ENCODE measurements at regions of chr12 and their contacts with region 1.

Region 1: DNA sequence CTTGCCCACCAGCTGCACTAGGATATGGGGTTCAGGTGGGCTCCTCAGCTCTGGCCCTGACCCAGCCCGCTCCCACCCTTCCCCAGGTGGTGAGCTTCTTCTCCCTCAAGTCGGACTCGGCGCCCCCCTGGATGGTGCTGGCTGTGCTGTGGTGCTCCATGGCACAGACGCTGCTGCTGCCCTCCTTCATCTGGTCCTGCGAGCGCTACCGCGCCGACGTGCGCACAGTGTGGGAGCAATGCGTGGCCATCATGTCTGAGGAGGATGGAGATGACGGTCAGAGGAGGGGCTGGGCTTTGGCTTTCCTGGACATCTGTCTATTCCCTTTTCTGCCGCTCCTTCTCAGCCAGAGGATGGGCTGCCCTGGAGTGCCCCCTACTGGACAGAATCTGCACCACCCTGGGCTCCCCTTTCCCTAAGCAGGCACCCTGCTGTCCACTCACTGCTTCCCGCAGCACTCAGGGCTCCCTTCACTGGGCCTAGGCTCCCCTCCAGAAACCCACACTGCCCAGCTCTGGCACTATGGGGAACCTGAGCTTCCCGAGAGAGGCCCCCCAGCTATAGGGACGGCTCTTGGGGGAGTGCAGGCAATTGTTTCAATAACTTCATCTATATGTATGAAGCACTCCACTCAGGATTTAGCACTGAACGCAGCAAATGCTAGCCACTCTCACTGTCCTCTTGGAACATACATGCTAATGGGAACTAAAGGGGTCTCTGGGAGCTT is 2.6 kb upstream of the P3H3 start:
- DNase-seq: peak; percentile 84
- ATAC-seq: peak; percentile 47
- H3K4me3 ChIP-seq: peak overlapping the region; percentile 18; the same call in 1 of the 2 replicates
- H3K27ac ChIP-seq: no peak overlapping the region
- H3K4me1 ChIP-seq: peaks cover 25% of the 10 kb centered on the region
- H3K27me3 ChIP-seq: peaks cover 2% of the 10 kb centered on the region; the same call in 1 of the 2 replicates
- CTCF ChIP-seq: peak; percentile 97
- POLR2A ChIP-seq: no peak
- RAD21 ChIP-seq: peak; percentile 96

Region 2: DNA sequence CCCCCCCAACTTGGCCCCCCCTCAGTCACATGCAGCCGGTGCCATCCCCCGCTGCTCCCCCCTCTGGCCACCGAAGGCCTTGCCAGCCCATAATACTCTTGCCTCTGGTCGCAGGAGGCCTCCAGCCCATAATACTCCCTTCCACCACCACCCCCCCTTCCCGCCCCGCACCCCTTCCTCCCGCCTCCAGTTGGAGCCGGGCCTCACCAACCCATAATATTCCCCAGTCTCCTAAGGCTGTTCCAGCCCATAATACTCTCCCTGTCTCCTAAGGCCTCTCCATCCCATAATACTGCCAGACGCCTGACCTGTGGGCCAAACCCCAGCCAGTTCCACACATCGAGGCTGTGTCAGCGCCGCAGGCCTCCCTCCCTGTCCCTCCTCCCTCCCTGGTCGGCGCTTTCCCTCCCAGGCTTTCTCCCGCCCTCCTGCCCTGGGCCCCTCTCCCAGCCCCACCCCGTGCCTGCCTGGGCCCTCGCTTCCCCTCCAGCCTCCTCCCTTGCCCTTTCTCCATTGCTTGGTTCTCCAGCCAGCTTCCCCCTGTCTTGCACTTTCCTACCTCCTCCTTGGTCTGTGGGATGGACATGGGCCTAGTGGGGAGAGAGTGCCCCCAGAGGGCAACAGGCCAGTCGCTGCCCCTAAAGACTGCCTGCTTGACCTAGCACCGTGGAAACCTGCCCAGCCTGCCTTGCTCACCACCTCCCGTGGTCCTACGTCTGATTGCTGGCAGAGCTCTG is 211.6 kb before region 1 on chr12:
- CTCF ChIA-PET with region 1: no interaction called
- POLR2A ChIA-PET with region 1: no interaction called
- dilution Hi-C with region 1: no loop called
- in situ Hi-C with region 1: loop called (anchors 10 kb)
- intact Hi-C with region 1: loop called (anchors 2 kb)
- DNase-seq: peak; percentile 99
- ATAC-seq: peak; percentile 83
- H3K4me3 ChIP-seq: no peak overlapping the region
- H3K27ac ChIP-seq: peak overlapping the region; percentile 88
- H3K4me1 ChIP-seq: peaks cover 23% of the 10 kb centered on the region
- H3K27me3 ChIP-seq: no peaks in the 10 kb centered on the region
- CTCF ChIP-seq: 0 out of 2 replicates have a peak, but pooled peaks have one; percentile 8
- POLR2A ChIP-seq: no peak
- RAD21 ChIP-seq: no peak

Region 3: GRCh38 chr12:6700646-6701051 is 124.9 kb before region 1 on chr12 and contains the start of gene PIANP:
- CTCF ChIA-PET with region 1: no interaction called
- POLR2A ChIA-PET with region 1: no interaction called
- dilution Hi-C with region 1: no loop called
- in situ Hi-C with region 1: no loop called
- intact Hi-C with region 1: no loop called
- DNase-seq: peak; percentile 21
- ATAC-seq: peak; percentile 84
- H3K4me3 ChIP-seq: peak within 1 kb of the TSS; percentile 81
- H3K27ac ChIP-seq: peak within 1 kb of the TSS; percentile 57
- H3K4me1 ChIP-seq: peaks cover 4% of the 10 kb centered on the region
- H3K27me3 ChIP-seq: peaks cover 3% of the 10 kb centered on the region; the same call in 1 of the 2 replicates
- CTCF ChIP-seq: no peak
- POLR2A ChIP-seq: no peak
- RAD21 ChIP-seq: no peak
- total RNA-seq, gene PIANP: under 0.01 and 0.18 TPM in 2 replicates

Region 4: GRCh38 chr12:6735448-6736191 is 89.9 kb before region 1 on chr12:
- CTCF ChIA-PET with region 1: no interaction called
- POLR2A ChIA-PET with region 1: no interaction called
- dilution Hi-C with region 1: no loop called
- in situ Hi-C with region 1: no loop called
- intact Hi-C with region 1: loop called (anchors 1 kb)
- DNase-seq: peak; percentile 58
- ATAC-seq: peak; percentile 94
- H3K4me3 ChIP-seq: no peak overlapping the region
- H3K27ac ChIP-seq: no peak overlapping the region
- H3K4me1 ChIP-seq: no peaks in the 10 kb centered on the region
- H3K27me3 ChIP-seq: no peaks in the 10 kb centered on the region
- CTCF ChIP-seq: peak; percentile 75
- POLR2A ChIP-seq: no peak
- RAD21 ChIP-seq: peak; percentile 66

Region 5: GRCh38 chr12:6752921-6753771 is 72.4 kb before region 1 on chr12 and contains the start of gene MLF2:
- CTCF ChIA-PET with region 1: no interaction called
- POLR2A ChIA-PET with region 1: interaction called, 3 read pairs
- dilution Hi-C with region 1: no loop called
- in situ Hi-C with region 1: loop called (anchors 5 kb)
- intact Hi-C with region 1: loop called (anchors 1 kb)
- DNase-seq: peak; percentile 99
- ATAC-seq: peak; percentile 93
- H3K4me3 ChIP-seq: peak within 1 kb of the TSS; percentile 71
- H3K27ac ChIP-seq: peak within 1 kb of the TSS; percentile 94
- H3K4me1 ChIP-seq: peaks cover 7% of the 10 kb centered on the region
- H3K27me3 ChIP-seq: no peaks in the 10 kb centered on the region
- CTCF ChIP-seq: no peak; the same call in 1 of the 2 replicates
- POLR2A ChIP-seq: no peak; the same call in none of the 2 replicates
- RAD21 ChIP-seq: no peak
- total RNA-seq, gene MLF2: 236 and 244 TPM in 2 replicates

Region 6: DNA sequence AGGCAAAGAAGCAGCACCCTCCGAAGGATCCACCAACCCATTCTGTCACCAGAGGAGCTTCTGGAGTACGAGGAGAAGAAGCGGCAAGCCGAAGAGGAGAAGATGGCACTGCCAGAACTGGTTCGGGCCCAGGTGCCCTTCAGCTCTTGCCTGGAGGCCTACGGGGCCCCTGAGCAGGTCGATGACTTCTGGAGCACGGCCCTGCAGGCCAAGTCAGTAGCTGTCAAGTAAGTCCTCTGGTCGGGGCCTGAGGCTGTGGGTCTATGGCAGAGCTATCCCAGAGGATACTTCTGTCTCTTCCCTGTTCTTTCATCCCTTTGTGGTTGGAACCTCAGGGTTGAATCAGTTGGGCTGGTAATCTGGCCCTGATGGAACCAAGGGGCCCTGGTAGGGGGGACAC is 35.8 kb after region 1 on chr12:
- CTCF ChIA-PET with region 1: no interaction called
- POLR2A ChIA-PET with region 1: no interaction called
- dilution Hi-C with region 1: no loop called
- in situ Hi-C with region 1: no loop called
- intact Hi-C with region 1: no loop called
- DNase-seq: no peak
- ATAC-seq: no peak
- H3K4me3 ChIP-seq: no peak overlapping the region
- H3K27ac ChIP-seq: no peak overlapping the region
- H3K4me1 ChIP-seq: no peaks in the 10 kb centered on the region
- H3K27me3 ChIP-seq: no peaks in the 10 kb centered on the region
- CTCF ChIP-seq: no peak
- POLR2A ChIP-seq: no peak
- RAD21 ChIP-seq: no peak

Region 7: DNA sequence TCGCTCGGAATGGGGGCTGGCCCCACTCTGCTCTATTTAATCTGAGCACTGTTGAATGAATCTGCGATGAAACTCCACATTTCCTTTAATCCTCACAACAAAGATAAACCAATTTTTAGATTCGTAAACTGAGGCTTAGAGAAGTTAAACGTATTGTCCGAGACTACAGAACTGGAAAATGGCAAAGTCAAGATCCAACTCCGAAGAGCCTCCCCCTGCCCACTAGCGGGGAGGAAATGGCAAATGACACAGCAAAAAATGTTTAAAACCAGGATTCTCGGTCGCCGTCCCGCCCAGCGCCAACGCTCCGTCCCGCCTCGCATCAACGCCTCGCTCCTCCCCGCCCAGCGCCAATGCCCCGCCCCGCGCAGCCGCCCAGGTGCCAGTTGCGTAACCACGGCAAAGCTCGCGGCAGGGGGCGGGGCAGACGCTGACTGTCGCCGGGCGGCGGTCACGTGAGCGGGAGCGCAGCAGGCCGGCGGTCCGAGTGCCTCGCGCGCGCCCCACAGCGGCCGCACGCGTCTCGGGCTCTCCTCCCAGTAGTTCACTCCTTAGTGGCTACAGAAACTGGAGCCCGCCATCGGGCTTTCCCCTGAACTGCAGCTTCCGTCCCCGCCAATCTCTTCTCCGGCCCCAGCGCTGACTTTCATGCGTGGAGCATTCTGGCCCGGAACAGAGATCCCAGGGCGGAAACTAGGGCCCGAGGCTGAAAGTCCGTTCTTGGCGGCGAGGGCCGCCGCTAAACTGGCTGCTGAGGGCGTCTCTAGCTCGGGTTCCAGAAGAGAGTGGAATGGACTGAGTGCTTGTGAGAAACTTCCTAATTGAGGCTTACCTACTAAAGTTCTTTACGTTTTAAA is 65.5 kb after region 1 on chr12:
- CTCF ChIA-PET with region 1: no interaction called
- POLR2A ChIA-PET with region 1: no interaction called
- dilution Hi-C with region 1: no loop called
- in situ Hi-C with region 1: no loop called
- intact Hi-C with region 1: loop called (anchors 1 kb)
- DNase-seq: peak; percentile 94
- ATAC-seq: peak; percentile 97
- H3K4me3 ChIP-seq: peak overlapping the region; percentile 39
- H3K27ac ChIP-seq: peak overlapping the region; percentile 90
- H3K4me1 ChIP-seq: peaks cover 2% of the 10 kb centered on the region; the same call in 1 of the 2 replicates
- H3K27me3 ChIP-seq: no peaks in the 10 kb centered on the region
- CTCF ChIP-seq: peak; percentile 96
- POLR2A ChIP-seq: peak; percentile 92
- RAD21 ChIP-seq: peak; percentile 53

Region 8: GRCh38 chr12:7339675-7340074 is 514.1 kb after region 1 on chr12:
- CTCF ChIA-PET with region 1: no interaction called
- POLR2A ChIA-PET with region 1: no interaction called
- dilution Hi-C with region 1: no loop called
- in situ Hi-C with region 1: no loop called
- intact Hi-C with region 1: no loop called
- DNase-seq: no peak
- ATAC-seq: no peak
- H3K4me3 ChIP-seq: no peak overlapping the region
- H3K27ac ChIP-seq: no peak overlapping the region
- H3K4me1 ChIP-seq: no peaks in the 10 kb centered on the region
- H3K27me3 ChIP-seq: no peaks in the 10 kb centered on the region
- CTCF ChIP-seq: no peak
- POLR2A ChIP-seq: no peak
- RAD21 ChIP-seq: no peak